GM13976 (cell line): ENCODE measurements at regions of chr4 and their contacts with region 1.

Region 1: GRCh38 chr4:16931339-16932305 is 33.2 kb upstream of the LDB2 start:
- DNase-seq: no peak
- CTCF ChIP-seq: no peak

Region 2: GRCh38 chr4:17027495-17027894 is 95.9 kb after region 1 on chr4:
- in situ Hi-C with region 1: loop called (anchors 25 kb)
- DNase-seq: no peak
- CTCF ChIP-seq: no peak